ENCODE measurements at regions of chr20 and their contacts with region 1.

Region 1: DNA sequence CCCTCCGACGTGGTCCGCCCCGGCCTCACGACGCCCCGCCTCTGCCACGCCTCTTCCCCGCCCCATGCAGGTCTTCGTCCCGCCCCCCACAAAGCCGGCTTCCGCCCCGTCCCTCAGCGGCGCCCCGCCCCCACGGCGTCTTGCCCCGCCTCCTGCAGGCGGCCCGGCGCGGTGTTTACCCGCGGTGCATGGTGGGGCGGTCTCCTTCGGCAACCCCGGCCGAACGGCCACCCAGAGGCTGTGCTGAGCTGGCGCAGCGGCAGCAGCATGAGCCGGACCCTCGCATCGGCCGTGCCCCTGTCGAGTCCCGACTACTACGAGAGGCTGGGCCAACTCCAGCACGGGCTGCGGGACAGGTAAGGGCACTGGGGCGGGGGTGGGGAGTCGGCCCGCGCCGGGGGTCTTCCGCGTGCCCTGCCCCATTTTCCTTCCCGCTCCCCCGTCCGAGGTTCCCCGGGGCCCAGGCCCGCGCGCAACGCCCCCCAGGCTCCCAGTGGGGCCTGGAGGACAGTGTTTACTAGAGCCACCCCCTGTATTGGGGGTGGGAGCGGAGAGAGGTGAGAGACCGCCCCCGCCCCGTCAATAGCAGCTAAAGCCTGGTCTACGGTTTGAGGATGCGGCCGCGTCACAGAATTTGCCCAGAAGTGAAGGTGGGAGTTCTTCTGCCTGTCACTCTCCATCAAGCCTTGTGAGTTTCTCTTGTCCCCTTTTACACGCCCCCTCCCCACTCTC is at the start of gene KIZ:
- DNase-seq: peak; percentile 59
- H3K4me3 ChIP-seq: peak within 1 kb of the TSS; percentile 97
- H3K27me3 ChIP-seq: no peaks in the 10 kb centered on the region
- CTCF ChIP-seq: peak; percentile 29; the same call in 1 of the 2 replicates
- polyA plus RNA-seq, gene KIZ: 13.6 and 22.8 TPM in 2 replicates

Region 2: DNA sequence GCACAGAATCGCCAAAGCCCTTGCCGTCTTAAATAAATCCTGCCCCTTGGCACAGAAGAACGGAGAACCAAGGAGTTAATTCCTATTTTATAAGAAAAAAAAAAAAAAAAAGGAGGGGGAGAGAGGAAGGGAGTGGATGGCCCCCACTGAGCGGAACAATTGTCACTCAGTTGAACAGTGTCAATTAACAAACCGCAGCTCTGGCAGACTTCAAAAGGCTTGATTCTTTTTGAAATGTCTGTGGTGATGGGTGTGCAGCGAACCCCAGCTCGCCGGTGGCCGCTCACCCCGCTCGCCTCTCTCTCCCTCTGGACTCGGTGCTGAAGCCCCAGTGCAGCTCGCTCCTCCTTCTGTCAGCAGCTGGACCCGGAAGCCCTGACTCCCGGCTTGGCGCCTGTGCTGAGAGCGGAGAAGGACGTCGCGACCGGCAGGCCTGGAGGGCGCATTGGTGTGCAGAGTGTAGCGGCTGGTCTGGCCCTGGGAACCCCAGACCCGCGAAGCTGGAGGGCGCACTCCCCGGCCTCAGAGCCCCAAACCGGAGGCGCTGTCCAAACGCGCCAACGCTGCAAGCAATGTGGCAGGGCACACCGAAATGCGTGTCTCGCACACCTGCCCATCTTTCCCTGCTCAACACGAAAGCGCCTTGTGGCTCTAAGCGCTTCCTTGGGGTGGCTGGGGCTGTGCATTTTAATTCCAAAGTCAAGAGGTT is 23.3 kb before region 1 on chr20:
- CTCF ChIA-PET with region 1: interaction called, 10 read pairs
- POLR2A ChIA-PET with region 1: no interaction called
- DNase-seq: no peak
- H3K4me3 ChIP-seq: no peak overlapping the region; the same call in 1 of the 2 replicates
- H3K27me3 ChIP-seq: peaks cover 71% of the 10 kb centered on the region
- CTCF ChIP-seq: no peak